ENCODE measurements at regions of chr7 and their contacts with region 1.

Region 1: DNA sequence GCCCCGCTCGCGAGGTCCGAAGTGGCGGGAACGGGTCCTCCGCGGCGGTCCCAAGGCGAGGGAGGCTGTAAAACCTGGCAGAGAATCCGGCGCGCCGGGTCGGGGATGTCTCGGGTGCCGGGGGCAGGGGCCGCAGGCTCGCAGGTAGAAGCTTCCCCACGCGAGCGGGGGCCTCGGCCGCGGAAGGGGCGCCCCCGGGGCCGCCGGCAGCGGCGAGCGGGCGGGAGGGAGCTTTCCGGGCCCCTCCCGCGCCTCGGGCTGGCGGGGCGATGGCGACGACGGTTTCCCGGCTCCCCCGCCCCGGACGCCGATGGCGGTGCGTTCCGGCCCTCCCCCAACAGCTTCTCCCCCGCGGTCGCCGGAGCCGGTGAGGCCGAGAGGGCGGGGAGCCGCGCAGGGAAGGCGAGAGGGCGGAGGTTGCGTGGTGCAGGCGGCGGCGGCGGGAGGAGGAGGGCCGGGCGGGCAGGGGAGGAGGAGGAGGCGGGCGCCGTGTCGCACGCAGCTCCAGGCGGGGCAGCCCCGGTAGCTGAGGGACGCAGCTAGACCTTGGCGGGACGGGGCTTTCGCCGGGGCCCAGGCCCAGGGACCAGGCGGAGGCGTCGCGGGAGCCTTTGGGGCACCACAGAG is at the start of gene CUL1:
- DNase-seq: peak; percentile 67
- H3K4me3 ChIP-seq: peak within 1 kb of the TSS; percentile 53 to 99 (median 72)
- H3K27ac ChIP-seq: peak within 1 kb of the TSS; percentile 87
- H3K4me1 ChIP-seq: peaks cover 33% of the 10 kb centered on the region
- H3K27me3 ChIP-seq: no peaks in the 10 kb centered on the region
- CTCF ChIP-seq: no peak
- POLR2A ChIP-seq: peak; percentile 63
- total RNA-seq, gene CUL1: 47.2 and 50.2 TPM in 2 replicates

Region 2: DNA sequence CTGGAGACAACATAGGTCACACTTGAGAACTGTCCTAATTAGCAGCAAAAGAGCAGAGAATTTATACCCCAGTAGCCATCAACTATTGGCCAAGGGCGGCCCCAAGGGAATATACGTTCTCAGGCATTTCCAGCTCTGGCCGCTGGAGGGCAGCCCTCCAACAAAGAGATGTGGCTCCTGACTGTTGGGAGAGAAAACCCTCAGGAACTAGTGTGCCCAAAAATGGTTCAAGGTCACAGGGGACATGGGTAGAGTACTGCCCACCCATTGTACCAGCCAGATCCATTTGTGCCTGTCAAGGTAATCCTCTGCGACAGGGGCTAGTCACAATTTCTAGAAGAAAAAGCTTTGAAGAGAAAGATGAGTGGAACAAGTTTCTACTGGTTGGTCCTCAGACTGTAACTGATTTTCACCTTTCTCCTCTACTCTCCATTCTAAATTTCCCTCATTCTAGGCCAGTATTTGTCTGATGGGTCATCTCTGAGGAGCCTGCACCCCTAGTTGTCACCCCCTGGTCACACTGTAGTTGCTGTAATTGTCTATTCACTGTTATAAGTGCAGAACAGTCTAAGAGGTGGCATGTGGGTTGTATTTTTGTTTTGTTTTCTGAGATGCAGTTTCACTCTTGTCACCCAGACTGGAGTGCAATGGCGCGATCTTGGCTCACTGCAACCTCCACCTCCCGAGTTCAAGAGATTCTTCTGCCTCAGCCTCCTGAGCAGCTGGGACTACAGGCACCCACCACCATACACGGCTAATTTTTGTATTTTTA is 122.7 kb before region 1 on chr7:
- CTCF ChIA-PET with region 1: interaction called, 7 read pairs
- POLR2A ChIA-PET with region 1: no interaction called
- dilution Hi-C with region 1: no loop called
- intact Hi-C with region 1: loop called (anchors 2 kb)
- DNase-seq: peak; percentile 71
- H3K4me3 ChIP-seq: no peak overlapping the region
- H3K27ac ChIP-seq: no peak overlapping the region
- H3K4me1 ChIP-seq: no peaks in the 10 kb centered on the region
- H3K27me3 ChIP-seq: no peaks in the 10 kb centered on the region
- CTCF ChIP-seq: peak; percentile 81 to 82
- POLR2A ChIP-seq: no peak

Region 3: GRCh38 chr7:148670807-148671206 is 27.7 kb before region 1 on chr7:
- CTCF ChIA-PET with region 1: interaction called, 3 read pairs
- POLR2A ChIA-PET with region 1: no interaction called
- dilution Hi-C with region 1: no loop called
- intact Hi-C with region 1: loop called (anchors 2 kb)
- DNase-seq: no peak
- H3K4me3 ChIP-seq: no peak overlapping the region
- H3K27ac ChIP-seq: no peak overlapping the region
- H3K4me1 ChIP-seq: peaks cover 4% of the 10 kb centered on the region
- H3K27me3 ChIP-seq: no peaks in the 10 kb centered on the region
- CTCF ChIP-seq: no peak
- POLR2A ChIP-seq: no peak

Region 4: DNA sequence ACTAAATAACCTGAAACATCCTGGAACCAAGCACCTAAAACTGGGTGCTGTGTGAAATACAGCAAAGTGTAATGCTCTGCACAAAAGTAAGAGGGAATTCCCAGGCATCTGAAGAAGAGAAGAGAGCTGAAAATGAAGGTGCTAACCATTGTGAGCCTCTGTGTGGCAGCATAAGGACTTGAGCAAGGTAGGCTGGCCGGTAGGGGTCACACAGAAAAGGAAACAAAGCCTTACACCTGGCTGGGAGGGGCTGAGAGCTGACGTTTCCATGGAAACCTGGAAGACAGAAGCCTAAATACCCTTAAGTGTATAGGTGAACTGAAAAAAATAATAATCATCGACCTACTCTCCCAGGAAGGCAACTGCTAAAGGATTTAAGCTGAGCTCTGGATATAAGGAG is 48.8 kb after region 1 on chr7:
- CTCF ChIA-PET with region 1: no interaction called
- POLR2A ChIA-PET with region 1: no interaction called
- dilution Hi-C with region 1: no loop called
- intact Hi-C with region 1: loop called (anchors 2 kb)
- DNase-seq: no peak
- H3K4me3 ChIP-seq: no peak overlapping the region
- H3K27ac ChIP-seq: no peak overlapping the region
- H3K4me1 ChIP-seq: no peaks in the 10 kb centered on the region
- H3K27me3 ChIP-seq: no peaks in the 10 kb centered on the region
- CTCF ChIP-seq: no peak
- POLR2A ChIP-seq: no peak

Region 5: DNA sequence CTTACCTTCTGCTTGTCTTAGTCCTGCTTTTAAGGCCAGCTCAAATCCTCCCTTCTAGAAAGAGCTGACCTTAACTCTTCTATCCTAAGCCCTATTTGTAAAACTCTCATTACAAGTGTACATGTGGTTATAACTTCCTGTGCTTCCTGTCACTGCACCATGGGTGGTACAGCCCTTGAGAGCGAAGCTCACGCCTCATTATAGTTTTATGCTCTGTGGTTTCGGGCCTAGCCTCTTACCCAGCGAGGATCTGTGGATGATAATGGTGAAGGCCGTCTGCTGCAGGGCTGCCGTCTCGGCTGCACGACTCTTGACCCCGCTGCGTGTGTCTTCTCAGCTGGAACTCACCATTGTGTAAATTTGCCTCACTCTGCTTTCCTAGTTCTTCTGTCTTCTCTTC is 74.8 kb after region 1 on chr7:
- CTCF ChIA-PET with region 1: no interaction called
- POLR2A ChIA-PET with region 1: no interaction called
- dilution Hi-C with region 1: no loop called
- intact Hi-C with region 1: loop called (anchors 2 kb)
- DNase-seq: no peak
- H3K4me3 ChIP-seq: no peak overlapping the region
- H3K27ac ChIP-seq: peak overlapping the region; percentile 47
- H3K4me1 ChIP-seq: peaks cover 10% of the 10 kb centered on the region
- H3K27me3 ChIP-seq: no peaks in the 10 kb centered on the region
- CTCF ChIP-seq: no peak
- POLR2A ChIP-seq: no peak

Region 6: DNA sequence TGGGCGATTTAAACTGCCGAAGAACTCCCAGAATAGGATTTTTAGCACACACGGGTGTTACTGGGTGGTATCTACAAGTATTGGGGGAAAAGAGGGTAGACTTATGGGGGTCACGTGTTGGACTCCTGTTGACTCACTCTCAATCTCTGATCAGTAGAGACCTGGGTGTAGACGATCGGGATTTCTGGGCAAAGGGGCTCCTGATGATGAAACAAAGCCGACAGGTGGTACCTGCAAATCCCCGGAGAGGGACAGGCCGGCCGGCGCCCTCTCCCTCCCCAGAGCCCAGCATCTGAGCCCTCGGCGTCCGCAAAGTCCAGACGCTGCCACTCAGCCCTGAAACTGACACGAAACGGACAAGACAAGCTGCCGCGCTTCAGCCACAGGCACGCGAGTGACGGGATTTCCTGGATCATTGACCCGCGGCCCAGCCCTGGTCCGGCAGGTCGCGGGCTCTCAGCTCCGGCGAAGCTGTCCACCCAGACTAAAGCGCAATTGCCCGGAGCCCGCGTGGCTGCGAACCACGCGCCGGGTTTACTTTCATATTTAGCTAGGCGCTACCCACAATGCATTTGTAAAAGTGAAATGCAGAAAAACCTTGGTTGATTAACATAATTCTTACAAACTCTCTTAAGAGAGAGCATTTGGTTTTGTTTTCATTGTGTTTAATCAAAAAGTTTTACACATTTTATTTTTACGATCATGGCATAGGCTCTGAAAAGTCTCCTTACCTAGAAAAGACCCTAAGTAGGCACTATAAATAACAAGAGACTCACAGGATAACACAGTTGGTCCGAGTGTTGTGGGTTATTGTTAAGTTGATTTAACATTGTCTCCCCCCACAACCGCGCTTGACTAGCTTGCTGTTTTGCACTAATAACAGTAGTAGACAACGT is 242.4 kb after region 1 on chr7:
- CTCF ChIA-PET with region 1: interaction called, 12 read pairs
- POLR2A ChIA-PET with region 1: interaction called, 3 read pairs
- dilution Hi-C with region 1: no loop called
- intact Hi-C with region 1: loop called (anchors 2 kb)
- DNase-seq: peak; percentile 90
- H3K4me3 ChIP-seq: peak overlapping the region; percentile 85 to 98 (median 88)
- H3K27ac ChIP-seq: peak overlapping the region; percentile 91
- H3K4me1 ChIP-seq: peaks cover 13% of the 10 kb centered on the region
- H3K27me3 ChIP-seq: no peaks in the 10 kb centered on the region
- CTCF ChIP-seq: no peak
- POLR2A ChIP-seq: peak; percentile 42

Region 7: GRCh38 chr7:148987010-148987750 is 288.7 kb after region 1 on chr7:
- CTCF ChIA-PET with region 1: no interaction called
- POLR2A ChIA-PET with region 1: no interaction called
- dilution Hi-C with region 1: no loop called
- intact Hi-C with region 1: loop called (anchors 1 kb)
- DNase-seq: peak; percentile 94
- H3K4me3 ChIP-seq: peak overlapping the region; percentile 21 to 63 (median 56)
- H3K27ac ChIP-seq: peak overlapping the region; percentile 32
- H3K4me1 ChIP-seq: peaks cover 11% of the 10 kb centered on the region
- H3K27me3 ChIP-seq: peaks cover 0 to 10% of the 10 kb centered on the region in 2 experiments
- CTCF ChIP-seq: no peak
- POLR2A ChIP-seq: peak; percentile 63